Activated CD4-positive, alpha-beta memory T cell treated with anti-CD3 and anti-CD28 coated beads for 36 hours (primary cell): ENCODE measurements at regions of chr4 and their contacts with region 1.

Region 1: GRCh38 chr4:107896158-107897045 is 34.9 kb upstream of the CYP2U1 start:
- DNase-seq: peak; percentile 34
- H3K4me3 Mint-ChIP-seq: no peak overlapping the region
- H3K27ac Mint-ChIP-seq: no peak overlapping the region
- H3K4me1 Mint-ChIP-seq: peaks cover 5% of the 10 kb centered on the region
- H3K27me3 Mint-ChIP-seq: peaks cover 24% of the 10 kb centered on the region

Region 2: GRCh38 chr4:107423677-107424405 is 472.6 kb before region 1 on chr4:
- CTCF ChIA-PET with region 1: no interaction called
- POLR2A ChIA-PET with region 1: no interaction called
- intact Hi-C with region 1: loop called (anchors 5 kb)
- DNase-seq: no peak
- H3K4me3 Mint-ChIP-seq: no peak overlapping the region
- H3K27ac Mint-ChIP-seq: no peak overlapping the region
- H3K4me1 Mint-ChIP-seq: no peaks in the 10 kb centered on the region
- H3K27me3 Mint-ChIP-seq: no peaks in the 10 kb centered on the region

Region 3: GRCh38 chr4:107552306-107552705 is 344.1 kb before region 1 on chr4:
- CTCF ChIA-PET with region 1: no interaction called
- POLR2A ChIA-PET with region 1: no interaction called
- intact Hi-C with region 1: loop called (anchors 10 kb)
- DNase-seq: no peak
- H3K4me3 Mint-ChIP-seq: no peak overlapping the region
- H3K27ac Mint-ChIP-seq: no peak overlapping the region
- H3K4me1 Mint-ChIP-seq: no peaks in the 10 kb centered on the region
- H3K27me3 Mint-ChIP-seq: no peaks in the 10 kb centered on the region

Region 4: GRCh38 chr4:107824353-107825071 is 71.9 kb before region 1 on chr4 and contains the start of gene SGMS2:
- CTCF ChIA-PET with region 1: no interaction called
- POLR2A ChIA-PET with region 1: no interaction called
- intact Hi-C with region 1: loop called (anchors 5 kb)
- DNase-seq: peak; percentile 86
- H3K4me3 Mint-ChIP-seq: peak within 1 kb of the TSS; percentile 77
- H3K27ac Mint-ChIP-seq: no peak within 1 kb of the TSS
- H3K4me1 Mint-ChIP-seq: peaks cover 9% of the 10 kb centered on the region
- H3K27me3 Mint-ChIP-seq: peaks cover 45% of the 10 kb centered on the region
- total RNA-seq, gene SGMS2: 0.36 to 0.76 TPM

Region 5: GRCh38 chr4:107863850-107864371 is 32.5 kb before region 1 on chr4:
- CTCF ChIA-PET with region 1: no interaction called
- POLR2A ChIA-PET with region 1: interaction called, 3 read pairs
- intact Hi-C with region 1: loop called (anchors 1 kb)
- DNase-seq: peak; percentile 60
- H3K4me3 Mint-ChIP-seq: no peak overlapping the region
- H3K27ac Mint-ChIP-seq: peak overlapping the region; percentile 28
- H3K4me1 Mint-ChIP-seq: peaks cover 21% of the 10 kb centered on the region
- H3K27me3 Mint-ChIP-seq: peaks cover 9% of the 10 kb centered on the region

Region 6: DNA sequence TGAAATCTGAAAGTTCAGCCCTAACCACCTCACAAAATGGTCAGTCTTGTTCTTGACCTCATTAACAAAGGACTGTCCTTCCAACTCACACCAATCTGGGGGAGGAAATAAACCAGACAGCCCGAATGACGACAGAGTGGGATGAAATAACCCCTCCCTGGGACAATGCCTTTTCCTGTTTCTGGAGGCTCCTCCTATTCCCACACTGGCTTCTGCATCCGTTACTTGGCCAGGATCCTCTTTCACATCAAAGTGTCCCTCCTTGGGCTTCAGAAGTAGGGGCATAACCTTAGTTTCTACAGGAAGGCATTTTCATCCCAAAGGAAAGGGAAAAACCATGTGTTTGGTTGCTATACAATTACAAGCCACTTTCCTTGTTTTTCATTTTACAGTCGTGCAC is 664.2 kb after region 1 on chr4:
- CTCF ChIA-PET with region 1: no interaction called
- POLR2A ChIA-PET with region 1: no interaction called
- intact Hi-C with region 1: no loop called
- DNase-seq: no peak
- H3K4me3 Mint-ChIP-seq: no peak overlapping the region
- H3K27ac Mint-ChIP-seq: no peak overlapping the region
- H3K4me1 Mint-ChIP-seq: no peaks in the 10 kb centered on the region
- H3K27me3 Mint-ChIP-seq: no peaks in the 10 kb centered on the region